PC-3 (cell line): ENCODE measurements at regions of chr3 and their contacts with region 1.

Region 1: GRCh38 chr3:112605285-112605684 is 35.7 kb downstream of the CCDC80 start:
- DNase-seq: peak; percentile 35
- ATAC-seq: no peak; the same call in 1 of the 2 replicates
- H3K4me3 ChIP-seq: no peak overlapping the region
- H3K27ac ChIP-seq: no peak overlapping the region
- H3K4me1 ChIP-seq: peaks cover 19% of the 10 kb centered on the region
- H3K27me3 ChIP-seq: no peaks in the 10 kb centered on the region
- CTCF ChIP-seq: no peak

Region 2: GRCh38 chr3:111362381-111363009 is 1242.8 kb before region 1 on chr3:
- CTCF ChIA-PET with region 1: no interaction called
- POLR2A ChIA-PET with region 1: no interaction called
- intact Hi-C with region 1: no loop called
- DNase-seq: no peak
- ATAC-seq: peak; percentile 33; the same call in 1 of the 2 replicates
- H3K4me3 ChIP-seq: no peak overlapping the region
- H3K27ac ChIP-seq: no peak overlapping the region
- H3K4me1 ChIP-seq: no peaks in the 10 kb centered on the region
- H3K27me3 ChIP-seq: no peaks in the 10 kb centered on the region
- CTCF ChIP-seq: no peak

Region 3: DNA sequence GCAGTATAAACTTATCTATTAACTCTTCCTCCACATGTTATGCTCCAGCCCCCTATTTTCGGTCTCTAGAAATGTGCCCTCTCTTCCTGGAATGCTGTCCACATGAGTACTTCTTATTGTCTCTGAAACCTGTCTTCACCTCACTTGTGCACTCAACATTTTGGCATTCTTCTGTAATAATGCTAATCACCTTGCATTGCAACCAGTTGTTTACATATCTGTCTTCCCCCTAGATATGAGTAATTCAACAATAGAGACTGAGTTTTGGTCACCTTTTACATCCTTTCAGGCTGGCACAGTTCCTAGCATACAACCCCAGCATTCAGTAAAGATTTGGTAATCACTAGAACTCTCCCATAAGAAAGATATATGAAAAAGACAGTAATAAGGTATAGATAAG is 18.4 kb after region 1 on chr3:
- CTCF ChIA-PET with region 1: no interaction called
- POLR2A ChIA-PET with region 1: no interaction called
- intact Hi-C with region 1: loop called (anchors 2 kb)
- DNase-seq: peak; percentile 90
- ATAC-seq: peak; percentile 78
- H3K4me3 ChIP-seq: peak overlapping the region; percentile 10; the same call in 1 of the 2 replicates
- H3K27ac ChIP-seq: peak overlapping the region; percentile 33
- H3K4me1 ChIP-seq: peaks cover 33% of the 10 kb centered on the region
- H3K27me3 ChIP-seq: no peaks in the 10 kb centered on the region
- CTCF ChIP-seq: no peak